Psoas muscle (tissue), 8 donors: ENCODE measurements at regions of chr9 and their contacts with region 1.

Region 1: GRCh38 chr9:70406434-70406862 is 8.0 kb downstream of the KLF9 start:
- DNase-seq: no peak
- ATAC-seq: no peak
- H3K4me3 ChIP-seq: peak overlapping the region; percentile 43
- H3K27ac ChIP-seq: peak overlapping the region; percentile 100
- H3K4me1 ChIP-seq: peaks cover 88% of the 10 kb centered on the region
- H3K27me3 ChIP-seq: no peaks in the 10 kb centered on the region
- CTCF ChIP-seq: no peak

Region 2: GRCh38 chr9:70324963-70325362 is 81.5 kb before region 1 on chr9:
- intact Hi-C with region 1: no loop called
- DNase-seq: no peak
- ATAC-seq: no peak
- H3K4me3 ChIP-seq: no peak overlapping the region
- H3K27ac ChIP-seq: no peak overlapping the region
- H3K4me1 ChIP-seq: no peaks in the 10 kb centered on the region
- H3K27me3 ChIP-seq: no peaks in the 10 kb centered on the region
- CTCF ChIP-seq: no peak

Region 3: GRCh38 chr9:70347046-70347445 is 59.4 kb before region 1 on chr9:
- intact Hi-C with region 1: loop called in 1 of 2 experiments (anchors 5 kb)
- DNase-seq: no peak
- ATAC-seq: no peak
- H3K4me3 ChIP-seq: no peak overlapping the region
- H3K27ac ChIP-seq: no peak overlapping the region
- H3K4me1 ChIP-seq: no peaks in the 10 kb centered on the region
- H3K27me3 ChIP-seq: no peaks in the 10 kb centered on the region
- CTCF ChIP-seq: no peak

Region 4: GRCh38 chr9:70639853-70640814 is 233.7 kb after region 1 on chr9:
- intact Hi-C with region 1: no loop called
- DNase-seq: no peak
- ATAC-seq: peak; percentile 44 to 80 (median 54)
- H3K4me3 ChIP-seq: no peak overlapping the region
- H3K27ac ChIP-seq: no peak overlapping the region
- H3K4me1 ChIP-seq: no peaks in the 10 kb centered on the region
- H3K27me3 ChIP-seq: peaks cover 0 to 3% (median 0%) of the 10 kb centered on the region in 3 donors
- CTCF ChIP-seq: peak; percentile 68